ENCODE measurements at regions of chr2 and their contacts with region 1.

Region 1: DNA sequence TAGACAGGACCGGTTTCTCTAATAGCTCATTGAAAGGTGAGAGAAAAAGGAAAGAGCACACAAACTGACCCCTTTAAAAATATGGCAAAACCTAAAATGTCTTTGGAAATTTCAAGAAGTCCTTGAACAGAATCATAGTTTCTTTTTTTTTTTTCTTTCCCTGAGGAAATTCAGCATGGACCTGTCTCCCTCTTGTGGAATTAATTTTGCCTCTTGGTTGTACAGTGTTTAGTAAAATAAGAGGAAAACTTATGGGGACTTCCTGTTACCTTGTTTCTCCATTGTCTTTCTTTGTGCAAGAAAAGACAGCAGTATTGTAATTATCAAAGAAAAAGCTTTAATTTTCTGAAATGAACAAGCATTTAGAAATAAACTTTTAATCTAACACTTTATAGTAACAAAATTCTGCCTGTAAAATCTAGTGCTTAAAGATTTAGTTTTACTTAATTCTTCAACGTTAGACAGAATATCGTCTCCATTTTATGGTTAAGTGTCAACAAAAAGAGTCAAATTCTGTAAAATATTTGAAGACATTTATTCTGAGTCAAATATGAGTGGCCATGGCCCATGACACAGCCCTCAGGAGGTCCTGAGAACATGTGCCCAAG is 176.3 kb upstream of the NABP1 start:
- DNase-seq: no peak
- H3K4me3 ChIP-seq: no peak overlapping the region
- H3K27ac ChIP-seq: peak overlapping the region in 2 of 4 donors; percentile 2 to 15
- H3K4me1 ChIP-seq: peaks cover 4 to 11% (median 7%) of the 10 kb centered on the region in 4 donors
- H3K27me3 ChIP-seq: no peaks in the 10 kb centered on the region
- CTCF ChIP-seq: peak; percentile 56 to 62 (median 61)
- EP300 ChIP-seq: no peak
- POLR2A ChIP-seq: no peak

Region 2: DNA sequence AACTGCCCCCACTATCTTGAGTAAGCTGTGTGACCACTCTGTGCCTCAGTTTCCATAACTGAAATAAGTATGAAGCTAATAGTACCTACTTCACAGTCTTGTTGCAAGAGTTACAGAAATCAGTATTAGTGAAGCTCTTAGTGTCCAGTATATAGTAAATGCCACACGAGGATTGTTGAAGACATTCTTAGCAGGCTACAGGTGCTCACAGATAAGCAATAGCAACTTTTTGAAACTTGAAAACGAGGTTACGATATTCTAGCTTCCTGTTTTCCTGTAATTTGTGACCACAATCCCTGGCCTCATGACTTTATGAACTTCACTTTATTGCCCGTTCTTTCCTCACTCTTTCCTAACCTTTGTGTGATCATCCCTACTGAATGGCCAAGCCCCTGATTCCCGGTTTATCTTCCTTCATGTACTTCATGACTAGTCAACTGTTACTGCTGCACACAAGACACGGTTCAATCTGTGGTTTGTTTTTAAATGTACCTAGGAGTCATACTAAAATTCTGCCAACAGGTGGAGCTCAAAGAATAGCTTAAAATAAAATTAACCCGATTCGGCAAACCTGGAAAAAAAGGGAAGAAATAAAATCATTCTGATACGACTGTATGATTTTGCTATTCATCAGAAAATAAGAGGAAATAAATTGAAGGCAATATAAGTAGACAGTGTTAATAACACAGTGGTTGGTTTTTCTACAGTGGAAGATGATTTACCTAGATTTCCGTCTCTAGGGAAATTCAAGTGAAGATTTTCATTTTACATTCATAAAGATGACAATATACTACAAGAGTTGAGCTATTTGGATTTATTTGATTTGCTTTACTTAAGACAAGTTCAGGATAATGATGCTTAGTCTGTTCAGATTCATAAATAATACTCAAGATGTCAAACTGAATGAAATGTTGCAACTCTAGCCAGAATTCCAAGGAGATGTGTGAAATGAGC is 449.6 kb before region 1 on chr2:
- intact Hi-C with region 1: loop called (anchors 5 kb)
- DNase-seq: no peak
- H3K4me3 ChIP-seq: no peak overlapping the region
- H3K27ac ChIP-seq: no peak overlapping the region
- H3K4me1 ChIP-seq: peaks cover 0 to 43% (median 22%) of the 10 kb centered on the region in 4 donors
- H3K27me3 ChIP-seq: peaks cover 0 to 5% (median 0%) of the 10 kb centered on the region in 4 donors
- CTCF ChIP-seq: peak; percentile 48 to 62 (median 61)
- EP300 ChIP-seq: no peak
- POLR2A ChIP-seq: no peak

Region 3: GRCh38 chr2:191165176-191165643 is 336.5 kb before region 1 on chr2:
- intact Hi-C with region 1: loop called (anchors 5 kb)
- DNase-seq: no peak
- H3K4me3 ChIP-seq: no peak overlapping the region
- H3K27ac ChIP-seq: no peak overlapping the region
- H3K4me1 ChIP-seq: peaks cover 25 to 35% (median 32%) of the 10 kb centered on the region in 4 donors
- H3K27me3 ChIP-seq: no peaks in the 10 kb centered on the region
- CTCF ChIP-seq: peak; percentile 52 to 74 (median 60)
- EP300 ChIP-seq: no peak
- POLR2A ChIP-seq: no peak

Region 4: DNA sequence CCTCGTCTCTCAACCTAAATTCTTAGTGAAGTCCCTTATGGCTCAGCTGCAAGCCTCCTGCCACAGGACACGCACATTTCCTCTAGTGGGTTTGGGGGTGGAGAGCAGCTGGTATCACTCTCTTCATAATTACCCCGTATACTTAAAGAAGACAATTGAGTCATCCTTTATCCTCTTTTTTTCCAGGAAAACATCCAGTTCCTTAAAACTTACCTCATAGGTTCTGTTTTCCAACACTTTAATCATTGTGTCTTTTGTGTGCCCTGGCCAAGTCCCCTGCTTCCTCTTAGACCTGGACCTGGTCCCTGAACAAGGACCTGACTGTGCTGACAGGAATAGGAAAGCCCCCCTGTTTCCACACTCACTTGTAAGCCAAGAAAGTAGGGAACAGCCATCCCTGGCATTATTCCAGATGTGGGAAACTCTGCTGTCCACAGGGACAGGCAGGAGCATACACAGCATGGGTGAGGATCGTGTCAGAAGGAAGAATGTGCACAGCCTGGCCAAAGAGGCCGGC is 298.7 kb before region 1 on chr2:
- intact Hi-C with region 1: no loop called
- DNase-seq: no peak
- H3K4me3 ChIP-seq: no peak overlapping the region
- H3K27ac ChIP-seq: peak overlapping the region in 1 of 4 donors; percentile 39
- H3K4me1 ChIP-seq: no peaks in the 10 kb centered on the region
- H3K27me3 ChIP-seq: no peaks in the 10 kb centered on the region
- CTCF ChIP-seq: no peak
- EP300 ChIP-seq: no peak
- POLR2A ChIP-seq: no peak

Region 5: GRCh38 chr2:191222507-191222906 is 279.2 kb before region 1 on chr2:
- intact Hi-C with region 1: loop called (anchors 5 kb)
- DNase-seq: no peak
- H3K4me3 ChIP-seq: no peak overlapping the region
- H3K27ac ChIP-seq: no peak overlapping the region
- H3K4me1 ChIP-seq: peaks cover 0 to 12% (median 7%) of the 10 kb centered on the region in 4 donors
- H3K27me3 ChIP-seq: no peaks in the 10 kb centered on the region
- CTCF ChIP-seq: no peak
- EP300 ChIP-seq: no peak
- POLR2A ChIP-seq: no peak